Activated CD4-positive, alpha-beta memory T cell treated with anti-CD3 and anti-CD28 coated beads for 36 hours (primary cell): ENCODE measurements at regions of chr18 and their contacts with region 1.

Region 1: GRCh38 chr18:56650944-56651770 is at the start of gene WDR7:
- DNase-seq: peak; percentile 98
- H3K4me3 Mint-ChIP-seq: peak within 1 kb of the TSS; percentile 90
- H3K27ac Mint-ChIP-seq: peak within 1 kb of the TSS; percentile 92
- H3K4me1 Mint-ChIP-seq: peaks cover 50% of the 10 kb centered on the region
- H3K27me3 Mint-ChIP-seq: no peaks in the 10 kb centered on the region
- total RNA-seq, gene WDR7: 18.0 to 19.5 TPM

Region 2: GRCh38 chr18:56221195-56222065 is 429.7 kb before region 1 on chr18:
- CTCF ChIA-PET with region 1: no interaction called
- POLR2A ChIA-PET with region 1: no interaction called
- intact Hi-C with region 1: no loop called
- DNase-seq: no peak
- H3K4me3 Mint-ChIP-seq: no peak overlapping the region
- H3K27ac Mint-ChIP-seq: no peak overlapping the region
- H3K4me1 Mint-ChIP-seq: no peaks in the 10 kb centered on the region
- H3K27me3 Mint-ChIP-seq: no peaks in the 10 kb centered on the region

Region 3: DNA sequence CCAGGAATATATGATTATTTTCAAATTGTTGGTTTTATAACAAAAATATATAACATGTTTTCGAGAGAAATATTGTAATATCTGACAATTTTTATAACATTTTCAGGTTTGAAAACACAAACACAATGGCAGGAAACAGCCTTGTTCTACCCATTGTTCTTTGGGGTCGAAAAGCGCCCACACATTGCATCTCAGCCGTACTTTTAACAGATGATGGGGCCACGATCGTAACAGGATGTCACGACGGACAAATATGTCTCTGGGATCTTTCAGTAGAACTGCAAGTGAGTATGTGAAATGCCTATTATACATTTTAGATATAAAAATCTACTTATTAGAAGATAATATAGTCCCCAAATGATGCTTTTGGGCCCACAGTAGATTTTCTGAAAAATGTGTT is 21.2 kb after region 1 on chr18:
- CTCF ChIA-PET with region 1: no interaction called
- POLR2A ChIA-PET with region 1: no interaction called
- intact Hi-C with region 1: loop called (anchors 1 kb)
- DNase-seq: no peak
- H3K4me3 Mint-ChIP-seq: no peak overlapping the region
- H3K27ac Mint-ChIP-seq: no peak overlapping the region
- H3K4me1 Mint-ChIP-seq: peaks cover 18% of the 10 kb centered on the region
- H3K27me3 Mint-ChIP-seq: no peaks in the 10 kb centered on the region

Region 4: GRCh38 chr18:57004366-57005121 is 353.4 kb after region 1 on chr18:
- CTCF ChIA-PET with region 1: no interaction called
- POLR2A ChIA-PET with region 1: no interaction called
- intact Hi-C with region 1: loop called (anchors 5 kb)
- DNase-seq: no peak
- H3K4me3 Mint-ChIP-seq: no peak overlapping the region
- H3K27ac Mint-ChIP-seq: peak overlapping the region; percentile 33
- H3K4me1 Mint-ChIP-seq: peaks cover 32% of the 10 kb centered on the region
- H3K27me3 Mint-ChIP-seq: no peaks in the 10 kb centered on the region

Region 5: GRCh38 chr18:57621246-57621604 is 970.1 kb after region 1 on chr18:
- CTCF ChIA-PET with region 1: no interaction called
- POLR2A ChIA-PET with region 1: no interaction called
- intact Hi-C with region 1: loop called (anchors 2 kb)
- DNase-seq: no peak
- H3K4me3 Mint-ChIP-seq: peak overlapping the region; percentile 91
- H3K27ac Mint-ChIP-seq: peak overlapping the region; percentile 95
- H3K4me1 Mint-ChIP-seq: peaks cover 26% of the 10 kb centered on the region
- H3K27me3 Mint-ChIP-seq: no peaks in the 10 kb centered on the region